Heart right ventricle (tissue), 16 donors: ENCODE measurements at regions of chr6 and their contacts with region 1.

Region 1: GRCh38 chr6:149941583-149942431 is at the start of gene ULBP2:
- DNase-seq: peak; percentile 85 to 91
- ATAC-seq: peak; percentile 95 to 99 (median 97)
- H3K4me3 ChIP-seq: peak within 1 kb of the TSS; percentile 27 to 74 (median 58)
- H3K27ac ChIP-seq: peak within 1 kb of the TSS in 9 of 10 donors; percentile 28 to 71 (median 62)
- H3K4me1 ChIP-seq: peaks cover 5 to 31% (median 24%) of the 10 kb centered on the region in 9 donors
- H3K27me3 ChIP-seq: peaks cover 16 to 58% (median 45%) of the 10 kb centered on the region in 7 donors
- CTCF ChIP-seq: no peak
- total RNA-seq, gene ULBP2: 0.46 to 2.4 (median 1.0) TPM

Region 2: GRCh38 chr6:149423964-149424440 is 517.8 kb before region 1 on chr6:
- intact Hi-C with region 1: no loop called
- DNase-seq: no peak
- ATAC-seq: no peak
- H3K4me3 ChIP-seq: no peak overlapping the region
- H3K27ac ChIP-seq: peak overlapping the region in 1 of 10 donors; percentile 38
- H3K4me1 ChIP-seq: peaks cover 0 to 11% (median 7%) of the 10 kb centered on the region in 9 donors
- H3K27me3 ChIP-seq: peaks cover 0 to 4% (median 0%) of the 10 kb centered on the region in 7 donors
- CTCF ChIP-seq: no peak

Region 3: DNA sequence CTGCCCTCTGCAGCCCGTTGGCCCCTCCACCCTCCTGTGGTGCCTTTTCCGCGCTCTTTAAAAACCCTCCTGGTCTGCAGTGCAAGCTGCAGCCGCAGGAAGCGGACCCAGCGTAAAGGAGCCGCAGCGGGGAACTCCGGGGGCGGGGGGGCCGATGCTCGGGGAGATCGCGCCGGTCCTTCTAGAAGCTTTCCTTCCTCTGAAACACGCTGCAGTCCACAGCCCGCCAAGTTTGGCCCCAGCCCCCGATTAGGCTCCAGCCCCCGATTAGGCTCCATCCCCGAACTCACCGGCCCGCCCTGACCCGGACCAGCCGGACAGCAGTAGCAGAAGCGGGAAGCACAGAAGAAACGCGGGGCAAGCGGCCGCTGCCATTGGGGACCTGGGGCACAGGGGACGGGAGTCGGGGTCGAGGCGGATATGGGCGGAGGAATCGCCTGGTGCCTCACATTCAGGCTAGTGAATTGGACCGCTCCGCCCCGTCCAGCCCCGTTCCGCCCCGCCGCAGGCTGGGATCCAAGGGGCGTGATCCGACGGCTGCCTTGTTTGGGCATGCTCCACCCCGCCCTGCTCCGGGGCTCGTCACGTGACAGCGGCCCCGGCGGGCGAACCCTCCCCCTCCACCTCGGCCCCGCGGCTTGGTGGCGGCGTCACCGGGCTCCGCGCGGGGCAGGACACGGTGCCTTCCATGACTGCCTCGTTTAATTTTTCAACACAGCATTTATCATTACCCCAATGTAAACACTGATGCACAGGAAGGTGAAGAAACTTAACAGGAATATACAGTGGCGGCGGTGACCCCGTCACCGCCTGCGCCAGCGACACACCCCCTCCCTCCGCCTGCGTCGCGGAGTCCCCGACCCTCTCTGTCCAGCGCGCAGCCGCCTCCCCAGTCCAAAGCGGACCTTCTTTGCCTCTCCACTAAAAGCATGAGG is 63.2 kb after region 1 on chr6:
- intact Hi-C with region 1: loop called in 3 of 10 experiments (anchors 2 to 5 kb)
- DNase-seq: peak; percentile 94
- ATAC-seq: peak; percentile 99
- H3K4me3 ChIP-seq: peak overlapping the region; percentile 21 to 78 (median 66)
- H3K27ac ChIP-seq: peak overlapping the region in 3 of 10 donors; percentile 39 to 42 (median 41)
- H3K4me1 ChIP-seq: peaks cover 6 to 16% (median 11%) of the 10 kb centered on the region in 9 donors
- H3K27me3 ChIP-seq: peaks cover 8 to 70% (median 55%) of the 10 kb centered on the region in 7 donors
- CTCF ChIP-seq: peak in 1 of 9 donors; percentile 7